ENCODE measurements at regions of chr12 and their contacts with region 1.

Region 1: DNA sequence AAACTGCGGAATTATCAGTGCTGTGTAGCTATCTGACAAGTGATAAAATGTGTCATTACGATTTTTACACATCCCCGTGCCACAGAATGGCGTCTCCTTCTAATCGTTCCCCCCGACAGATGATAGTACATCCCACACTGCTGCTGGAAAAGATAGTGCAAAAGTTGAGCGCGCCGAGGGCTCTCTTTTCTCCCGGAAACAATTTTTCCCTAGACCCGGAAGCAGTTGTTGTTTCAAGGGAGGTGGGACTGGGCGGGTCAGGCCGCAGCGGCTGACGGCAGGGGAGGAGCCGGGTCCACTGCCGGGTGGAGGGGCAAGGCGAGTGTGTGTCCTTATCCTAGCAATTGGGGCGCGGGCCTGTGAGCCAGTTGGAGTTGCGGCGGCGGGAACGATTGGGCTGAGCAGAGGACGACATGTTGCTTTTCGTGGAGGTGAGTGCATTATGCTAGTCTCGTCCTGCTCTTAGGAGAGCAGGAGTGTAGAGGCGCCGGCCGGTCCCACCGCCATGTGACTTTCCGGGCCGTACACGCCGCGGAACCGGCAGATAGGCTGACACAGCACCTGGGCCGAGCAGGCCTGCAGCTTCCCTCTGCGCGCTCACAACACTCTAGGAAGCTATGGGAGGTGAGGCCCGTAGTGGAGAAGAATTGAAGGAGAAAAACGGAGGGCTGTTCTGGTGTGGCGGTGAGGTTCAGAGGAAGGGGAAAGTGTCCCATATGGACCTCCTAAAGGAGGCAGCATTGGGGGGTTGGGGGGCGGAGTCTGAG is at the start of gene LARP4:
- DNase-seq: peak; percentile 90
- H3K4me3 Mint-ChIP-seq: peak within 1 kb of the TSS; percentile 94
- H3K27ac Mint-ChIP-seq: peak within 1 kb of the TSS; percentile 95
- H3K4me1 Mint-ChIP-seq: peaks cover 16% of the 10 kb centered on the region
- H3K27me3 Mint-ChIP-seq: no peaks in the 10 kb centered on the region
- CTCF ChIP-seq: no peak
- total RNA-seq, gene LARP4: 57.7 and 67.6 TPM in 2 replicates

Region 2: GRCh38 chr12:50326636-50327284 is 74.0 kb before region 1 on chr12:
- CTCF ChIA-PET with region 1: no interaction called
- intact Hi-C with region 1: loop called (anchors 5 kb)
- DNase-seq: peak; percentile 25
- H3K4me3 Mint-ChIP-seq: peak overlapping the region; percentile 40
- H3K27ac Mint-ChIP-seq: peak overlapping the region; percentile 30
- H3K4me1 Mint-ChIP-seq: peaks cover 18% of the 10 kb centered on the region
- H3K27me3 Mint-ChIP-seq: no peaks in the 10 kb centered on the region
- CTCF ChIP-seq: no peak

Measured in Calu3 (cell line).